GM12878 (cell line): ENCODE measurements at regions of chr2 and their contacts with region 1.

Region 1: GRCh38 chr2:109341355-109342255 is 212.6 kb downstream of the SH3RF3 start:
- DNase-seq: no peak
- ATAC-seq: peak; percentile 47
- H3K4me3 ChIP-seq: no peak overlapping the region
- H3K27ac ChIP-seq: no peak overlapping the region
- H3K4me1 ChIP-seq: no peaks in the 10 kb centered on the region
- H3K27me3 ChIP-seq: no peaks in the 10 kb centered on the region
- CTCF ChIP-seq: no peak
- EP300 ChIP-seq: no peak
- POLR2A ChIP-seq: no peak
- RAD21 ChIP-seq: no peak

Region 2: GRCh38 chr2:109396202-109397180 is 54.9 kb after region 1 on chr2:
- CTCF ChIA-PET with region 1: no interaction called
- POLR2A ChIA-PET with region 1: no interaction called
- RAD21 ChIA-PET with region 1: no interaction called
- SMC1A ChIA-PET with region 1: interaction called, 3 read pairs
- in situ Hi-C with region 1: no loop called
- intact Hi-C with region 1: loop called (anchors 2 kb)
- DNase-seq: no peak
- ATAC-seq: peak; percentile 87
- H3K4me3 ChIP-seq: no peak overlapping the region
- H3K27ac ChIP-seq: no peak overlapping the region
- H3K4me1 ChIP-seq: no peaks in the 10 kb centered on the region; the same call in 1 of the 2 replicates
- H3K27me3 ChIP-seq: no peaks in the 10 kb centered on the region
- CTCF ChIP-seq: no peak
- EP300 ChIP-seq: no peak; a peak in 1 of 4 replicates
- POLR2A ChIP-seq: no peak
- RAD21 ChIP-seq: no peak